ENCODE measurements at regions of chr16 and their contacts with region 1.

Region 1: DNA sequence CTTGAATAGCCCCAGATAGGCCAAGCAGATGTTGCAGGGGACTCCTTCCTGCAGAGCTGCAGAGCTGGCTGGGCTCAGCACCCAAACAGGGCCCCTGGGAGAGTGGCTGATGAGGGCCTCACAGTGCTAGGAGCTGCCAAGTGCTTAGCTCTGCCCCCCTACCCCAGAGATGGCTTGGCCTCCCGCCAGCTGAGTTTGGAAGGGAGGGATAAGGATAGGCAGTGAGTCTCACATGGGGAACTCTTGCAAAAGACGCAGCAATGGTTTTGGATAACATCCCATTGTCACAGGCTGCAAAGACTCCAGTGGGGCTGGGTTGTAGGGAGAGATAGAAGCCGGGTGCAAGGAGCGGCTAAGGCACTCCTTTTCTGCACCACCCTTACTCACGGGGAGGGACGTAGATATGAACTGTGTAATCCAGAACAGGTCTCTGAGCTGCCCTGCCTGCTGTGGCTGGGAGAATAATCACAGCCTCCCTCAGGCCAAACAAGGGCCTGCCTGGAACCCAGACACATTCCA is 52.9 kb upstream of the MAF start:
- DNase-seq: no peak
- H3K4me3 ChIP-seq: no peak overlapping the region
- H3K27ac ChIP-seq: no peak overlapping the region
- H3K4me1 ChIP-seq: peaks cover 29% of the 10 kb centered on the region
- H3K27me3 ChIP-seq: no peaks in the 10 kb centered on the region
- CTCF ChIP-seq: no peak

Region 2: DNA sequence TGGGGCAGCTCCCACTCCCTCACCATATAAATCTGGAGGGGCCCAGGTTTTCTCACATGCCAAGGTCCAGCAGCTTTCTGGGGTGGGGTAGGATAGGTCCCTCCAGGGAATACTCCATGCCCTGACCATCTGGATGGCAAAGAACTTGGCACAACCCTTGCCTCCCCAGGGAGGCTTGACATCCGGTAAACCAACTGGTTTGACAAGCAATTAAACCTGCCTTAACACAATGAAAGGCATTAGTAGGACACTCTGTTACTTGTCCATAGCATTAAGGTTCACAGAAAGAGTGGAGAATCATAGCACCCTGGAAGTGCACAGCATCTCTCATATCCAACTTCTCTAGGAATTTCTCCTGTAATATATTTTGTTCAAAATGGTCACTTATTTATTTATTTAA is 11.0 kb after region 1 on chr16:
- CTCF ChIA-PET with region 1: no interaction called
- dilution Hi-C with region 1: no loop called
- in situ Hi-C with region 1: no loop called
- intact Hi-C with region 1: no loop called
- DNase-seq: no peak
- H3K4me3 ChIP-seq: no peak overlapping the region
- H3K27ac ChIP-seq: no peak overlapping the region
- H3K4me1 ChIP-seq: peaks cover 23% of the 10 kb centered on the region
- H3K27me3 ChIP-seq: no peaks in the 10 kb centered on the region
- CTCF ChIP-seq: no peak

Region 3: GRCh38 chr16:79707876-79708275 is 54.4 kb after region 1 on chr16:
- CTCF ChIA-PET with region 1: interaction called, 27 read pairs
- dilution Hi-C with region 1: no loop called
- in situ Hi-C with region 1: no loop called
- intact Hi-C with region 1: no loop called
- DNase-seq: peak; percentile 27
- H3K4me3 ChIP-seq: no peak overlapping the region
- H3K27ac ChIP-seq: no peak overlapping the region
- H3K4me1 ChIP-seq: no peaks in the 10 kb centered on the region
- H3K27me3 ChIP-seq: no peaks in the 10 kb centered on the region
- CTCF ChIP-seq: no peak

Region 4: GRCh38 chr16:80330803-80331202 is 677.4 kb after region 1 on chr16:
- CTCF ChIA-PET with region 1: no interaction called
- dilution Hi-C with region 1: no loop called
- in situ Hi-C with region 1: no loop called
- intact Hi-C with region 1: no loop called
- DNase-seq: no peak
- H3K4me3 ChIP-seq: no peak overlapping the region
- H3K27ac ChIP-seq: no peak overlapping the region
- H3K4me1 ChIP-seq: no peaks in the 10 kb centered on the region
- H3K27me3 ChIP-seq: no peaks in the 10 kb centered on the region
- CTCF ChIP-seq: no peak